ENCODE measurements at regions of chr4 and their contacts with region 1.

Region 1: DNA sequence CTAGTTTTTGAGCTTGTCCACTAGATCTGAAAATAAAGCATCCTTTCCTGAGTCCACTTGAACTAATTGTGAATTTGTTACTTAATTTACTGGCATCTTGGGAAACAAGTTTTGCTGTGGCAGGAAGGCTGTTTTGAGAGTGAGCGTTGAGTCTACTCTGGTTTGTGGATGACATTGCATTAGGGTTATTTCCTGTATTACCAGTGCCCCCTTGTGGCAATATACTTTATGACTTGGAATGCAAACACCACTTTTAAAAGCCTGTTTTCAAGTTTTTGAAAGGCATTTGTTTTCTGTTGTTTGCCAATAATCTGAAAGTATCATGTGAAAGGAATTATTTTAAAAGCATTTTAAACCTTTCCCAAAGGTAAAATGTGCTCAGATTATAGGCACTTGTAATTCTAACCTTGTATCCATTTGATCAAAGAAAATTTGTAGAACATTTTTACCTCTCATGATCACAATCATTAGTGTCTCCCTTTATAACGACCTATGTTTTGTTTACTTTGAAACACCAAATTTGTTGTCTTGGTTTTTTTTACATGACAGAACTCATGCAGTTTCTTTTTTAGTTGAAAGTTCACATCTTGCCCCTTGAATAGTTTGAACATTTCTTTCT is 18.0 kb upstream of the CYP2U1 start:
- DNase-seq: peak in 2 of 10 donors; percentile 22 to 36
- H3K4me3 ChIP-seq: no peak overlapping the region
- H3K27ac ChIP-seq: no peak overlapping the region
- H3K27me3 ChIP-seq: no peaks in the 10 kb centered on the region
- CTCF ChIP-seq: peak; percentile 71 to 96 (median 87)

Region 2: GRCh38 chr4:107757864-107758476 is 155.4 kb before region 1 on chr4:
- intact Hi-C with region 1: loop called (anchors 2 kb)
- DNase-seq: no peak
- H3K4me3 ChIP-seq: no peak overlapping the region
- H3K27ac ChIP-seq: no peak overlapping the region
- H3K27me3 ChIP-seq: peaks cover 0 to 4% (median 0%) of the 10 kb centered on the region in 45 donors
- CTCF ChIP-seq: peak; percentile 56 to 88 (median 73)

Measured in dorsolateral prefrontal cortex (tissue), 120 donors.